BJ (cell line): ENCODE measurements at regions of chr10 and their contacts with region 1.

Region 1: GRCh38 chr10:3538658-3539531 is 246.1 kb downstream of the KLF6 start:
- DNase-seq: peak; percentile 84
- H3K4me3 ChIP-seq: no peak overlapping the region
- H3K27me3 ChIP-seq: no peaks in the 10 kb centered on the region
- CTCF ChIP-seq: no peak

Region 2: GRCh38 chr10:3265088-3265487 is 273.8 kb before region 1 on chr10:
- CTCF ChIA-PET with region 1: no interaction called
- POLR2A ChIA-PET with region 1: no interaction called
- DNase-seq: no peak
- H3K4me3 ChIP-seq: no peak overlapping the region
- H3K27me3 ChIP-seq: peaks cover 6% of the 10 kb centered on the region; the same call in 1 of the 2 replicates
- CTCF ChIP-seq: no peak

Region 3: DNA sequence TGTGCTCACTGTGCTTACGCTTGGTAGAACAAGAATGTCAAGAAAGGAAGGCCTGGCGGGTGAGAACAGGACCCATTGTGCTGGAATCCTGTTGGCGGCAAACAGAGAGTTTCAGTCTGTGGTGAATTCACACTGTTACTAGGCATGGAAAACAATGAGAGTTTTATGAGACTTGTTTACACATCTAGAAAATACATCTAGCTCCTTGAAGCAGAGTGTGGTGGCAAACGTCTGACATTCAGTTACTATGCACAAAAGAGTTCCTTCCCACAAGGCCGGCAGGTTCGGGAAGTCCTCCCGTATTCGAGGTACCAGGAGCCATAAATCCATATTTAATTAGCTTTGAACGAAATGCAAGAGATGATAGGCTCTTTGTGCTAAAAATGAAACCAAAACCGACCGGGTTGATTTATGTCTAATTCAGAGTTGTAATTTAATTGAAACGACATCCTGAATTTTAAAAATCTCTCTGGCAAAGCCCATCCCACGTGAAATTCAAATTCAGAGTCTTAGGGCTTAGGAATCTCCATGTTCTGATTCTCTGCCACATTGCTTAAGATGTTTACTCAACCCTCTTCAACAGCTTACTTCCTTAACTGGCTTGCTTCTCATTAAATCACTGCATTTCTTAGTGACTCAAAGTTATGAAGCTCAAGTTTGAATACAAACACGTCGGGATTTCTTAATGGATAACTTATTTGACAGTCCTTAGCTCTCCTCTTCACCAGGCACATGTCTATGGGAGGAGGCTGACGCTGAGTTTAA is 66.4 kb before region 1 on chr10:
- CTCF ChIA-PET with region 1: no interaction called
- POLR2A ChIA-PET with region 1: interaction called, 14 read pairs
- DNase-seq: no peak
- H3K4me3 ChIP-seq: no peak overlapping the region
- H3K27me3 ChIP-seq: no peaks in the 10 kb centered on the region
- CTCF ChIP-seq: no peak

Region 4: GRCh38 chr10:3775696-3776551 is 237.0 kb after region 1 on chr10:
- CTCF ChIA-PET with region 1: no interaction called
- POLR2A ChIA-PET with region 1: no interaction called
- DNase-seq: no peak
- H3K4me3 ChIP-seq: no peak overlapping the region
- H3K27me3 ChIP-seq: no peaks in the 10 kb centered on the region
- CTCF ChIP-seq: no peak